ENCODE measurements at regions of chr16 and their contacts with region 1.

Region 1: GRCh38 chr16:20789130-20789529 is 17.1 kb downstream of the ERI2 start:
- DNase-seq: no peak
- ATAC-seq: no peak
- H3K4me3 ChIP-seq: no peak overlapping the region
- H3K27ac ChIP-seq: no peak overlapping the region
- H3K4me1 ChIP-seq: no peaks in the 10 kb centered on the region
- CTCF ChIP-seq: no peak
- EP300 ChIP-seq: no peak
- POLR2A ChIP-seq: no peak
- RAD21 ChIP-seq: no peak

Region 2: GRCh38 chr16:20774703-20775362 is 14.3 kb before region 1 on chr16:
- CTCF ChIA-PET with region 1: interaction called, 12 read pairs
- POLR2A ChIA-PET with region 1: no interaction called
- DNase-seq: peak; percentile 64 to 77
- ATAC-seq: peak; percentile 98 to 100
- H3K4me3 ChIP-seq: no peak overlapping the region
- H3K27ac ChIP-seq: no peak overlapping the region
- H3K4me1 ChIP-seq: no peaks in the 10 kb centered on the region
- CTCF ChIP-seq: peak; percentile 58
- EP300 ChIP-seq: no peak
- POLR2A ChIP-seq: no peak
- RAD21 ChIP-seq: peak; percentile 44 to 45

Region 3: GRCh38 chr16:21194771-21195301 is 405.7 kb after region 1 on chr16:
- CTCF ChIA-PET with region 1: no interaction called
- POLR2A ChIA-PET with region 1: no interaction called
- DNase-seq: no peak
- ATAC-seq: no peak
- H3K4me3 ChIP-seq: no peak overlapping the region
- H3K27ac ChIP-seq: no peak overlapping the region
- H3K4me1 ChIP-seq: no peaks in the 10 kb centered on the region
- CTCF ChIP-seq: no peak
- EP300 ChIP-seq: no peak
- POLR2A ChIP-seq: no peak
- RAD21 ChIP-seq: no peak

Measured in A549 (cell line).